ENCODE measurements at regions of chr2 and their contacts with region 1.

Region 1: GRCh38 chr2:48343571-48344440 is 186.1 kb upstream of the STON1 start:
- DNase-seq: peak; percentile 32
- ATAC-seq: peak; percentile 47
- H3K4me3 ChIP-seq: peak overlapping the region in 4 of 5 experiments; percentile 3 to 33 (median 18)
- H3K4me3 Mint-ChIP-seq: peak overlapping the region; percentile 74
- H3K27ac ChIP-seq: peak overlapping the region in 1 of 2 donors; percentile 50
- H3K27ac Mint-ChIP-seq: peak overlapping the region; percentile 39
- H3K4me1 ChIP-seq: peaks cover 11 to 19% of the 10 kb centered on the region in 2 donors
- H3K4me1 Mint-ChIP-seq: peaks cover 38% of the 10 kb centered on the region
- H3K27me3 ChIP-seq: no peaks in the 10 kb centered on the region
- H3K27me3 Mint-ChIP-seq: no peaks in the 10 kb centered on the region
- CTCF ChIP-seq: no peak

Region 2: DNA sequence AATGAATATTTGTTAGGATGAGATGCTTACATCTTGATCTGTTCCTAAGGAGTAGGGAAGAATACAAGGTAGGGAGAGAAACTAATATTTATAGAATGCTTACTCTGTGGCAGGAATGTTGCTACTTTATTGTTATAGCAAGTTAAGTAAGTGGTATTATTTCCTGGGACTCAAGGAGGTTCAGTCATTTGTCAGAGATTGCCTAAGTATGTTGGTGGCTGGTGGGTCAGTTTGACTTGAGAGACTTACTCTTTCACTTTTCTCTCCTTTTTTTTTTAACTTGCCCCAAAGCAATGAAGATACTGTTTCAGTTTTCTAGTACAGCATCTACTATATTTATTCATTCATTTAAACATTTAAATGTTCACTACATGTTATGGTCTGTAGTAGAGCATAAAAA is 23.1 kb before region 1 on chr2:
- CTCF ChIA-PET with region 1: no interaction called
- POLR2A ChIA-PET with region 1: no interaction called
- intact Hi-C with region 1: loop called (anchors 2 kb)
- DNase-seq: no peak
- ATAC-seq: no peak
- H3K4me3 ChIP-seq: peak overlapping the region in 1 of 5 experiments; percentile 12
- H3K4me3 Mint-ChIP-seq: peak overlapping the region; percentile 73
- H3K27ac ChIP-seq: peak overlapping the region; percentile 78 to 81
- H3K27ac Mint-ChIP-seq: peak overlapping the region; percentile 90
- H3K4me1 ChIP-seq: peaks cover 47 to 73% of the 10 kb centered on the region in 2 donors
- H3K4me1 Mint-ChIP-seq: peaks cover 67% of the 10 kb centered on the region
- H3K27me3 ChIP-seq: no peaks in the 10 kb centered on the region
- H3K27me3 Mint-ChIP-seq: no peaks in the 10 kb centered on the region
- CTCF ChIP-seq: no peak

Region 3: DNA sequence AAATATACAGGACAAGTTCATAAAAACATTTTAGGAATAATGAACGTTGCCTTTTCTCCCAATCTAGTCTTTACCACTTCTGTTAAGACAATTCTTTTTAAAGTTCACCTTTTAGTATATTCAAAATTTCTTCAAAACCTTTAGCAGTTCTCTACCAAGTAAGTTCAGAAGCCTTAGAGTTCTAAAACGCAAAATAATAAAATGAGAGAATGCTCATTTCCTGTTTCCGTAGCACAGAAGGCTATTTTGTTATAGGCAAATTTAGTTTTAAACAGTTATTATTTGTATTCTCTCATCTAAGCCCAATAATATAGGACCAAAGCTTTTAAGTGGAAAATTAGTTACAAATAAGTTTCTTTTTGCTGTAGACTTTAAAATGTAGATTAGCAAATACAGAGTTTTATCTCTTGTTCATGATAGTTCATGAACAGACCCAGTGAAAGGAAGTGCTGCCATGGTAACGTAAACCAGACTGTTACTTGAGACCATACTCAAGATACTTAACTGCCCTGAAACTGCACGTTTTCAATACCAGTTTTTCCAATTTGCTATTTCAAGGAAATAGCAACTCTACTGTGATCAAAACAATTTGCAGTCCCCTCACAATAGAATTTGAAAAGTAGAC is 13.0 kb after region 1 on chr2:
- CTCF ChIA-PET with region 1: no interaction called
- POLR2A ChIA-PET with region 1: interaction called, 6 read pairs
- intact Hi-C with region 1: loop called (anchors 1 kb)
- DNase-seq: peak; percentile 59
- ATAC-seq: peak; percentile 68
- H3K4me3 ChIP-seq: peak overlapping the region in 2 of 5 experiments; percentile 16 to 43
- H3K4me3 Mint-ChIP-seq: peak overlapping the region; percentile 72
- H3K27ac ChIP-seq: peak overlapping the region; percentile 58 to 85
- H3K27ac Mint-ChIP-seq: peak overlapping the region; percentile 86
- H3K4me1 ChIP-seq: peaks cover 40 to 46% of the 10 kb centered on the region in 2 donors
- H3K4me1 Mint-ChIP-seq: peaks cover 61% of the 10 kb centered on the region
- H3K27me3 ChIP-seq: no peaks in the 10 kb centered on the region
- H3K27me3 Mint-ChIP-seq: no peaks in the 10 kb centered on the region
- CTCF ChIP-seq: no peak

Measured in B cell (primary cell).